Heart left ventricle (tissue), 16 donors: ENCODE measurements at regions of chr11 and their contacts with region 1.

Region 1: GRCh38 chr11:73307323-73308002 is 613 bp upstream of the ARHGEF17 start:
- DNase-seq: peak; percentile 97 to 98 (median 97)
- ATAC-seq: peak; percentile 65 to 77 (median 74)
- H3K4me3 ChIP-seq: peak overlapping the region; percentile 56 to 90 (median 74)
- H3K27ac ChIP-seq: peak overlapping the region; percentile 93 to 100 (median 98)
- H3K4me1 ChIP-seq: peaks cover 0 to 59% (median 35%) of the 10 kb centered on the region in 12 donors
- H3K27me3 ChIP-seq: peaks cover 0 to 15% (median 0%) of the 10 kb centered on the region in 9 donors
- CTCF ChIP-seq: peak; percentile 59 to 95 (median 82)
- POLR2A ChIP-seq: peak in 1 of 2 donors; percentile 10

Region 2: GRCh38 chr11:73323464-73323863 is 16.0 kb after region 1 on chr11:
- intact Hi-C with region 1: loop called in 2 of 10 experiments (anchors 2 kb)
- DNase-seq: peak; percentile 86 to 91 (median 89)
- ATAC-seq: peak; percentile 52 to 84 (median 60)
- H3K4me3 ChIP-seq: peak overlapping the region in 6 of 12 donors; percentile 6 to 32 (median 16)
- H3K27ac ChIP-seq: peak overlapping the region; percentile 49 to 99 (median 86)
- H3K4me1 ChIP-seq: peaks cover 31 to 100% (median 89%) of the 10 kb centered on the region in 12 donors
- H3K27me3 ChIP-seq: no peaks in the 10 kb centered on the region
- CTCF ChIP-seq: peak in 1 of 12 donors; percentile 19
- POLR2A ChIP-seq: peak in 1 of 2 donors; percentile 51

Region 3: GRCh38 chr11:73376160-73376802 is 68.8 kb after region 1 on chr11 and contains the start of gene RELT:
- intact Hi-C with region 1: loop called in 1 of 10 experiments (anchors 1 kb)
- DNase-seq: peak; percentile 89 to 96 (median 91)
- ATAC-seq: peak; percentile 73 to 91 (median 90)
- H3K4me3 ChIP-seq: peak within 1 kb of the TSS; percentile 58 to 92 (median 73)
- H3K27ac ChIP-seq: peak within 1 kb of the TSS in 11 of 12 donors; percentile 52 to 92 (median 82)
- H3K4me1 ChIP-seq: peaks cover 0 to 59% (median 39%) of the 10 kb centered on the region in 12 donors
- H3K27me3 ChIP-seq: no peaks in the 10 kb centered on the region
- CTCF ChIP-seq: peak; percentile 77 to 98 (median 93)
- POLR2A ChIP-seq: peak; percentile 68 to 97
- total RNA-seq, gene RELT: 1.0 to 13.9 (median 2.6) TPM

Region 4: DNA sequence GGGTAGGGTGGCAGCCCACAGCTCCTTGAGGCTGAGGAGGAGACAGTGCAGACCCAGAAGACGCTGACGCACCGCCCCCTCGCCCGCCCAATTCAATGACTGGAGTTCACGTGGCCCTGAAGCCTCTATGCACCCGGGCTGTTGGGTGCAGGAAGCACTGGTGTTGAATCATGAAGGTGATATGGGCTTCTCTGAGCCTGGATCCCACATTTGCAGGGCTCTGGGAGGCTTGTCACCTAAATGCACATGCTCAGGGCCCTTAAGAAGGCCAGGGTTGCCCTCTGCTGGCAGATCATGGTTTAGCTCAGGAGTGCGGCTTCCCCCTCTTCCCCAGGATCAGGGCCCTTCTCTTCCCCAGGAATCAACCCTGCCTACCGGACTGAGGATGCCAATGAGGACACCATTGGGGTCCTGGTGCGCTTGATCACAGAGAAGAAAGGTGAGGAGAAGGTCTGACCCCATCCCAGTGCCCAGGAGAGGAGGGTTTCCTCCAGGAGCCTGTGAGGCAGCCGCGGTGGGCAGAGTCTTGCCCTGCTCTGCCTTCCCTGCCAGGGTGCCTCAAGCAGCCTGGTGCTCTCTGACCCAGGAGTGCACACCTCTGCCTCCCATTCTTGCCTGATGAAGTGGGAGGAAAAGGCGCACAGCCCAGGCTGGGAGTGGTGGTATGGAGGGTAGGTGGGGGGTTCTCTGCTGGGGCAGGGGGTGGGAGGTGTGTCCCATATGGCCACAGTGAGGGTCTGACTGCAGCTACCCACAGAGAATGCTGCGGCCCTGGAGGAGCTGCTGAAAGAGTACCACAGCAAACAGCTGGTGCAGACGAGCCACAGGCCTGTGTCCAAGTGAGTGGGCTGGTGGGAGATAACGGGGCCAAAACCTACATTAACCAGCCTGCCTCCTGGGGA is 86.3 kb after region 1 on chr11:
- intact Hi-C with region 1: loop called in 7 of 10 experiments (anchors 1 to 5 kb)
- DNase-seq: peak; percentile 71 to 87 (median 79)
- ATAC-seq: peak; percentile 58 to 79 (median 70)
- H3K4me3 ChIP-seq: no peak overlapping the region
- H3K27ac ChIP-seq: peak overlapping the region in 1 of 12 donors; percentile 13
- H3K4me1 ChIP-seq: peaks cover 0 to 37% (median 13%) of the 10 kb centered on the region in 12 donors
- H3K27me3 ChIP-seq: no peaks in the 10 kb centered on the region
- CTCF ChIP-seq: peak; percentile 58 to 83 (median 78)
- POLR2A ChIP-seq: no peak

Region 5: DNA sequence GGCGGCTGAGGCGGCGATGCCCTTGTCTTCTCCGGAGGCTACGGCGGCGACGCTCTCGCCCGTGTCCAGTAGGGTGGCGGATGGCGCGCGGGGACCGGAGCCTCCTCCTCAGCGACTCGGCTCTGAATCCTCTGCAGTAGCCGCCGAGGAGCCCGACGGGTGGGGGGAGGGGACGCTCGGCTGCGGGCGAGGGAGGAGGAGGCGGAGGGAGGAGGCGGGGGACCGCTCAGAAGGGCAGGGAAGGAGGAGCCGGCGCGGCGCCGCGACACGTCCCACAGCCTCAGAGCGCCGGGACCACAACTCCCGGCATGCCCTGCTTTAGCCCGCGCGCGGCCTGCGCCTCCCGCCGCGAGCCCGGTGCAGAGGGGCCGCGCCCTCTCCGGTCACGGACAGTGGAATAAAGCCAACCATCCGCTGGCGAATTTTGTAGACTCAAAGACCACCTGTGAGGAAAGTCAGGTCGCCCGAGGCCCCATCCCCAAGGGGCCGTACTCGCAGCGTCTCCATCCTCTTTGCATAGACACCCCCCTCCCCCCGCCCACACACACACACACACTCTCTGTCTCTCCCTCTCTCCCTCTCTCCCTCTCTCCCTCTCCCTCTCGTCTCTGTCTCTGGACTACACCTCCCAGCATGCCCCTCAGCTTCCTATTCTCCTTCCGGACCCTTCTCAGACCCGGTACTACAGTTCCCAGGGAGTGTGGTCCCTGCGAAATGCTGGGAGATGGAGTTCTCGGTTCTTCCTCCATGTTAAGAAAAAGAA is 290.7 kb after region 1 on chr11 and contains the start of gene FAM168A:
- intact Hi-C with region 1: loop called in 1 of 10 experiments (anchors 5 kb)
- DNase-seq: peak; percentile 97 to 98 (median 98)
- ATAC-seq: peak; percentile 97 to 99 (median 98)
- H3K4me3 ChIP-seq: peak within 1 kb of the TSS; percentile 75 to 97 (median 90)
- H3K27ac ChIP-seq: peak within 1 kb of the TSS; percentile 69 to 92 (median 86)
- H3K4me1 ChIP-seq: peaks cover 0 to 28% (median 15%) of the 10 kb centered on the region in 12 donors
- H3K27me3 ChIP-seq: no peaks in the 10 kb centered on the region
- CTCF ChIP-seq: peak in 8 of 12 donors; percentile 14 to 44 (median 25)
- POLR2A ChIP-seq: peak in 1 of 2 donors; percentile 75
- total RNA-seq, gene FAM168A: 21.1 to 39.1 (median 31.2) TPM